ENCODE measurements at regions of chr17 and their contacts with region 1.

Region 1: DNA sequence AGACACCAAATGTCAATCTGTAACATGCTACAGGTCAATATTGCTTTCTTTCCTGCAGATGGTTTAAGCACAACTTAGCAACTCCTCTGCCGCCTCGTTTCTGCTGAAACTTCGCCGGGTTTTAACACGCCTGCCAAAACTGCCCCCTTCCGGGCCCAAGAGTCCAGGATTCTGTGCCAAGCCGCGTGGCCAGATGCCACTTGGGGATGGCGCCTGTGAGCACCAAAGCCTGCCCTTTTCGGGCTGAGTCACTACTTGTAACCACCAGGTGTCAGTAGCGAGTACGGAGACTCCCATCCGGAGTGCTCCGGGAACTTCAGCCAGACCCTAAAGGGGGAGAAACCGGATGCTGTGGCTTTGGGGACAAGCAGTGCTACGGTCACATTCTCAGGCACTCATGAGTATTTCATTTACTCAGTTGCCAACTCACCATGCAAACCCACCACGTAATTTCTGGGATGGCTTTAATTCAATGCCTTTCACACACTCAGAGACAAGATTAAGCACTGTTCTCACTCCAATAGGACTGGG is 7.8 kb downstream of the PMP22 start:
- DNase-seq: peak; percentile 11 to 56 (median 36)
- ATAC-seq: peak; percentile 70
- H3K4me3 ChIP-seq: no peak overlapping the region
- H3K4me3 Mint-ChIP-seq: peak overlapping the region in 5 of 10 donors; percentile 8 to 56 (median 8)
- H3K27ac ChIP-seq: no peak overlapping the region
- H3K27ac Mint-ChIP-seq: no peak overlapping the region
- H3K4me1 ChIP-seq: peaks cover 0 to 12% of the 10 kb centered on the region in 2 donors
- H3K4me1 Mint-ChIP-seq: peaks cover 0 to 26% (median 11%) of the 10 kb centered on the region in 7 donors
- H3K27me3 ChIP-seq: peaks cover 3 to 13% of the 10 kb centered on the region in 2 donors
- H3K27me3 Mint-ChIP-seq: peaks cover 56 to 68% (median 61%) of the 10 kb centered on the region in 5 donors

Region 2: DNA sequence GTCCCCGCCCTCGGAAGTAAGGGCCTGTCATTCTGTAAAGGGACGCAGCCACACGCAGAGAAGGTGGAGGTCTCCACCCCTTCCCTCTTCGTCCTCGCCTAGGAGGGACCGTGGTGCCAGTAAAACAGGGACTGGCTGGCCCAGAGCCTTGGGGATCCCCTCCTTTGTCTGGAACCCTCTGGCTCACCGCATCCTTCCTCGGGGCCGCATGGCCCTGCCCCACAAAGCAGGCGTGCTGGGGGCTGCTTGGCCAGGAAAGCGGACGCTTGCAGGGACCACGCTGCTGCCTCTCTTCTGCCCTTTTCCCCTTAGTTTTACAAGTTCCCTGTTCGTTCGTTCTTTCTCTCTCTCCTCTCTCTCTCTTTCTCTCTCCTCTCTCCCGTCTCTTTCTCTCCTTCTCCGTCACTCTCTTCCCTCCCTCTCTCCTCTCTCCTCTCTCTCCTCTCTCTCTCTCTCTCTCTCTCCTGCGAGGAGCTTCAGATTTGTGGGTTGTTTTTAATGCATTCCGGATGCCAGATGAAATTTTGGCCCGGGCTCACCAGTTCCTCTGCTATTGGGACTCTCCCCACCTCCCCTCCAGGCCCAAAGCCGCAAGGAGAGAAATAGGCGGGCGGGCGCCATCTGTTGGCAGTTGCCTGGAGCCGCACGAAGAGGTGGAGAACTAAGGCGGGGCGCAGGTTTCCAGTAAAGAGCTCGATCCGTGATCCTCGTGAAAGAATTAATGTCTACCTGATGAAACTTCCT is 245.2 kb after region 1 on chr17:
- CTCF ChIA-PET with region 1: interaction called, 6 read pairs
- POLR2A ChIA-PET with region 1: no interaction called
- intact Hi-C with region 1: loop called in 1 of 2 experiments (anchors 1 kb)
- DNase-seq: peak; percentile 28 to 74 (median 53)
- ATAC-seq: peak; percentile 90
- H3K4me3 ChIP-seq: no peak overlapping the region
- H3K4me3 Mint-ChIP-seq: peak overlapping the region in 3 of 10 donors; percentile 26 to 65 (median 53)
- H3K27ac ChIP-seq: no peak overlapping the region
- H3K27ac Mint-ChIP-seq: peak overlapping the region in 2 of 9 donors; percentile 43 to 60
- H3K4me1 ChIP-seq: no peaks in the 10 kb centered on the region
- H3K4me1 Mint-ChIP-seq: peaks cover 6 to 14% (median 8%) of the 10 kb centered on the region in 7 donors
- H3K27me3 ChIP-seq: no peaks in the 10 kb centered on the region
- H3K27me3 Mint-ChIP-seq: no peaks in the 10 kb centered on the region